T-cell (primary cell): ENCODE measurements at regions of chr3 and their contacts with region 1.

Region 1: DNA sequence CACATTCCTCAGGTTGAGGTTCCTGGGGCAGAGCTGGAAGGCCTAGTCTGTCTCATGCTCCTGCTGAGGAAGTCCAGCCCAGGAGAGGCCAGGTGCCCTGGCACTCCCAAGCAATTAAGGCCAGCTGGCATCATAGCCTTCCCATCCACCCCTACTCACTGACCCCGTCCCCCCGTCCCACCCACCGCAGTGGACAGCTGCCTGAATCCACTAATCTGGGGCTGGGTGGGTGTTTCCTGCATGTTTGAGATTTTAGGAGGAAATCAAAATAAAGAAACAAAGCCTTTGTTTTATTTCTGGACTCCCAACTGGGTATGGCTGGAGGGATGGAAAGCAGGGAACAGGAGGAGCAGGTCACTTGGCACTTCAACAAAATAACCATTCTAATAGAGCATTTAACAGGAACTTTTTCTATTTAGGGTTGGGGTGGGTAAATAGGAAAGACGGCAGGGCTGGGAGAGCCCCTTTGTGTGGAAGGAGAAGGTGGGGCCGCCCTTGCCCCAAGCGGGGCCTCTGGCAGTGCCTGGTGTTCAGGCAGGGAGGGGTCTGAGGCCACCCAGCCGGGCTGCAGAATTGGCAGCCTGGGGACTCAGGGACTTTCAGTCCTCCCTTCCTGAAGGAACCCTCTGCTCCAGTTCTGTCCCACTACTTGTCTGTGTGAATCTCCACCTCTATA is 8.5 kb downstream of the MRAS start:
- DNase-seq: no peak
- ATAC-seq: no peak
- H3K4me3 ChIP-seq: no peak overlapping the region
- H3K4me3 Mint-ChIP-seq: no peak overlapping the region
- H3K27ac ChIP-seq: no peak overlapping the region
- H3K27ac Mint-ChIP-seq: no peak overlapping the region
- H3K4me1 ChIP-seq: no peaks in the 10 kb centered on the region
- H3K4me1 Mint-ChIP-seq: no peaks in the 10 kb centered on the region
- H3K27me3 ChIP-seq: peaks cover 0 to 9% of the 10 kb centered on the region in 2 experiments
- H3K27me3 Mint-ChIP-seq: peaks cover 3 to 4% of the 10 kb centered on the region in 2 donors

Region 2: GRCh38 chr3:138450704-138451424 is 94.0 kb after region 1 on chr3:
- CTCF ChIA-PET with region 1: interaction called in 1 of 2 experiments, 10 read pairs
- POLR2A ChIA-PET with region 1: no interaction called
- DNase-seq: no peak
- ATAC-seq: no peak
- H3K4me3 ChIP-seq: no peak overlapping the region
- H3K4me3 Mint-ChIP-seq: no peak overlapping the region
- H3K27ac ChIP-seq: no peak overlapping the region
- H3K27ac Mint-ChIP-seq: no peak overlapping the region
- H3K4me1 ChIP-seq: peaks cover 0 to 2% of the 10 kb centered on the region in 2 experiments
- H3K4me1 Mint-ChIP-seq: peaks cover 0 to 2% (median 2%) of the 10 kb centered on the region in 3 donors
- H3K27me3 ChIP-seq: peaks cover 0 to 8% of the 10 kb centered on the region in 2 experiments
- H3K27me3 Mint-ChIP-seq: peaks cover 2 to 6% of the 10 kb centered on the region in 2 donors